ENCODE measurements at regions of chr2 and their contacts with region 1.

Region 1: GRCh38 chr2:170715062-170715931 is at the start of gene SP5:
- DNase-seq: peak; percentile 88 to 94 (median 90)
- ATAC-seq: peak; percentile 92
- H3K4me3 ChIP-seq: peak within 1 kb of the TSS; percentile 50
- H3K27ac ChIP-seq: peak within 1 kb of the TSS; percentile 79
- H3K4me1 ChIP-seq: peaks cover 4 to 34% of the 10 kb centered on the region in 2 experiments; a peak in 2 of 5 replicates
- H3K27me3 ChIP-seq: no peaks in the 10 kb centered on the region
- CTCF ChIP-seq: no peak
- EP300 ChIP-seq: peak; percentile 19; the same call in 1 of the 2 replicates
- POLR2A ChIP-seq: no peak
- RAD21 ChIP-seq: no peak
- polyA plus RNA-seq, gene SP5: 0.03 TPM

Region 2: GRCh38 chr2:170409164-170409535 is 306.1 kb before region 1 on chr2:
- CTCF ChIA-PET with region 1: no interaction called
- POLR2A ChIA-PET with region 1: no interaction called
- in situ Hi-C with region 1: no loop called
- intact Hi-C with region 1: loop called (anchors 10 kb)
- DNase-seq: peak; percentile 79 to 90 (median 84)
- ATAC-seq: peak; percentile 95
- H3K4me3 ChIP-seq: no peak overlapping the region
- H3K27ac ChIP-seq: no peak overlapping the region
- H3K4me1 ChIP-seq: 0 out of 5 replicates have a peak, but pooled peaks cover 0 to 2% of the 10 kb centered on the region in 2 experiments
- H3K27me3 ChIP-seq: no peaks in the 10 kb centered on the region
- CTCF ChIP-seq: peak; percentile 80 to 95 (median 92)
- EP300 ChIP-seq: 0 out of 2 replicates have a peak, but pooled peaks have one; percentile 37
- POLR2A ChIP-seq: no peak
- RAD21 ChIP-seq: peak; percentile 81 to 84

Region 3: GRCh38 chr2:170764880-170765261 is 49.6 kb after region 1 on chr2:
- CTCF ChIA-PET with region 1: no interaction called
- POLR2A ChIA-PET with region 1: interaction called, 5 read pairs
- in situ Hi-C with region 1: no loop called
- intact Hi-C with region 1: loop called (anchors 1 kb)
- DNase-seq: peak in 1 of 4 experiments; percentile 7
- ATAC-seq: peak; percentile 51
- H3K4me3 ChIP-seq: no peak overlapping the region
- H3K27ac ChIP-seq: peak overlapping the region; percentile 58; the same call in 2 of the 3 replicates
- H3K4me1 ChIP-seq: peaks cover 4 to 22% of the 10 kb centered on the region in 2 experiments; a peak in 3 of 5 replicates
- H3K27me3 ChIP-seq: no peaks in the 10 kb centered on the region
- CTCF ChIP-seq: no peak
- EP300 ChIP-seq: no peak
- POLR2A ChIP-seq: no peak
- RAD21 ChIP-seq: no peak

Region 4: DNA sequence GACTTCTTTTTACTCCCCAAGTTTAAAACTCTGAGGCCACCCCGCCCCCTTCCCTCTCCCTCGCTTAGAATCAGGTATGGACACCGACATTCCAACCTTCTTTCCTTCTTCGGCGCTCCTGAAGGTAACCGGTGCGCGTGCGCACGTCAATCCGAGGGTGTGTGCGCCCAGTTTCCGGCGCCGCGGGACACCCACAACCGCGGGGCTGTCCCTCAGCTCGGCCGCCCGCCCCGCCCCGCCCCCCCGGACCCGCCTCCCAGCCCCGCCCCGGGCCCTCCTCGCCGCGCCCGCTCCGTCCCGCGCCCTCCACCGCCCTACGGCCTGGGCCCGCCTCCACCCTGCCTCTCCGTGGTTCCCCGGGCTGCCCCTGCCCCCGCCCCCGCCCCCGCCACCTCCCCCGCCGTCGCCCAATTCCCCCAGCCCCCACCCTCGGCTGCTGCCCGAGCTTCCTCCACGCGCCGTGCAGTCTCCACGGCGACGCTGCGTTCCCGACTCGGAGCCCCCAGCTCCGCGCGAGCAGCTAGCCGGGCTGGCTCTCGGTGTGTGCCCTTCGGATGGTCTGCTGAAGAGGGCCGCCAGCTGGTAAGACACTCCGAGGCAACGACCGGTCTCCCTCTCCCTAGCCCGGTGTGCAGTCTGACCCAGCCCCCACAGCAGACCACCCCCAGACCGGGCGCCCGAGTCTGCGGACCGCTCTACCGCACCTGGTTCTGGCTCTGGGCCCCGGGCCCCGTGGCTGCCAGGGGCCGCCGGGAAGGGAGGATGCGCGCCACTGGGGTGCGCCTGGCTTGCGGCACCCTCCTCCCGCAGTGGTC is 55.5 kb after region 1 on chr2:
- CTCF ChIA-PET with region 1: no interaction called
- POLR2A ChIA-PET with region 1: interaction called, 5 read pairs
- in situ Hi-C with region 1: no loop called
- intact Hi-C with region 1: loop called (anchors 1 kb)
- DNase-seq: peak; percentile 94 to 98 (median 98)
- ATAC-seq: peak; percentile 92
- H3K4me3 ChIP-seq: peak overlapping the region; percentile 81
- H3K27ac ChIP-seq: peak overlapping the region; percentile 95
- H3K4me1 ChIP-seq: peaks cover 7 to 19% of the 10 kb centered on the region in 2 experiments
- H3K27me3 ChIP-seq: no peaks in the 10 kb centered on the region
- CTCF ChIP-seq: peak in 2 of 3 experiments; percentile 4 to 20; a peak in 2 of 6 replicates
- EP300 ChIP-seq: no peak; the same call in 1 of the 2 replicates
- POLR2A ChIP-seq: peak; percentile 84
- RAD21 ChIP-seq: peak; percentile 4 to 25; a peak in 1 of 4 replicates

Region 5: DNA sequence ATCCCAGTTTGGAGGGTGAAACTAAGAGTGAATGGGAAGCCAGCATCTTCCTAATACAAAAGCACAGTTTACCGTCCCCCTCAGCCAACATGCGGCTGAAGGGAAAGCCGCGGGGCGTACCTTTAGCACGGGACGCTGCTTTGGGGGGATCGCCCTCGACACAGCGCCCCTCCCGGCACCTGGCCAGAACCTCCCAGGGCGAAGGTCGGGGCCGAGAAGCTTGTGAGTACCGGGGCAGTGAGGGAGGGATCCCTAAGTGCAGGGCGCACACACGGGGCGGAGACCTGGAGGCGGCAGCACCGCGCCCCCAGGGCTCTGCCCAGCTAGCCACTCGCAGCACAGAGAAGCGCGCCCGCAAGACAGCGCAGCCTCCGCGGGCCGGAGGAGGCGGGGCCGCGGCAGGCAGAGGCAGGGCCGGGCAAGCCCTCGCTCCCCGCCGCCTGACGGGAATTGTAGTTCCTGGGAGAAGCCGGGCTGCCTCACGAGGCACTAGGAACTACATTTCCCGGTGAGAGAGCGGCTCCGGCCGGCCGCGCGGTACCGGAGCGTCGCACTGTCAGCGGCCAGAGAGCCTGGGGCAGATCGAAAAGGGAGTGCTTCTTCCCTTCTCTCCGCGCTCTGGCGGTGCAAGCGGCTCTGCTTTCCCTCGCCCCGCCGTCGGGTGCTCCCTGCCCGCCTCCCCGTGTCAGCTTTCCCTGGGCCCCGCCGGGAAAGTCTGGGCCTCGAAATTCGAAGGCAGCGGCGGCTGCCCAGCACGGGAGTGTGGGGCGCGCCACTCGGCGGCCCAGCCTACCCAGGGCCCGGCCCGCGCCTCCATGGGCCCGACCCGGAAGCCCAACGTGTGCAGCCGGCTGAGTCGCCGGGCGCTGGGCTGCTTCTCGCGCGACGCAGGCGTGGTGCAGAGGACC is 718.7 kb after region 1 on chr2 and contains the starts of genes DCAF17 and METTL8:
- CTCF ChIA-PET with region 1: no interaction called
- POLR2A ChIA-PET with region 1: no interaction called
- in situ Hi-C with region 1: no loop called
- intact Hi-C with region 1: no loop called
- DNase-seq: peak; percentile 95 to 99 (median 96)
- ATAC-seq: peak; percentile 97
- H3K4me3 ChIP-seq: peak within 1 kb of the TSS; percentile 86
- H3K27ac ChIP-seq: peak within 1 kb of the TSS; percentile 94
- H3K4me1 ChIP-seq: peaks cover 13 to 18% of the 10 kb centered on the region in 2 experiments
- H3K27me3 ChIP-seq: no peaks in the 10 kb centered on the region
- CTCF ChIP-seq: peak; percentile 92 to 93 (median 92)
- EP300 ChIP-seq: peak; percentile 34; the same call in 1 of the 2 replicates
- POLR2A ChIP-seq: peak; percentile 96
- RAD21 ChIP-seq: peak; percentile 13 to 45; a peak in 3 of 4 replicates
- polyA plus RNA-seq, gene DCAF17: 10.0 to 12.0 TPM
- polyA plus RNA-seq, gene METTL8: 12.9 to 16.7 TPM